Right cardiac atrium (tissue), 5 donors: ENCODE measurements at regions of chr12 and their contacts with region 1.

Region 1: GRCh38 chr12:569803-570434 is 93.3 kb downstream of the NINJ2 start:
- DNase-seq: peak; percentile 91 to 97 (median 96)
- ATAC-seq: peak; percentile 78 to 82
- H3K4me3 ChIP-seq: peak overlapping the region; percentile 47
- H3K27ac ChIP-seq: peak overlapping the region; percentile 93
- H3K4me1 ChIP-seq: peaks cover 9% of the 10 kb centered on the region
- H3K27me3 ChIP-seq: no peaks in the 10 kb centered on the region

Region 2: DNA sequence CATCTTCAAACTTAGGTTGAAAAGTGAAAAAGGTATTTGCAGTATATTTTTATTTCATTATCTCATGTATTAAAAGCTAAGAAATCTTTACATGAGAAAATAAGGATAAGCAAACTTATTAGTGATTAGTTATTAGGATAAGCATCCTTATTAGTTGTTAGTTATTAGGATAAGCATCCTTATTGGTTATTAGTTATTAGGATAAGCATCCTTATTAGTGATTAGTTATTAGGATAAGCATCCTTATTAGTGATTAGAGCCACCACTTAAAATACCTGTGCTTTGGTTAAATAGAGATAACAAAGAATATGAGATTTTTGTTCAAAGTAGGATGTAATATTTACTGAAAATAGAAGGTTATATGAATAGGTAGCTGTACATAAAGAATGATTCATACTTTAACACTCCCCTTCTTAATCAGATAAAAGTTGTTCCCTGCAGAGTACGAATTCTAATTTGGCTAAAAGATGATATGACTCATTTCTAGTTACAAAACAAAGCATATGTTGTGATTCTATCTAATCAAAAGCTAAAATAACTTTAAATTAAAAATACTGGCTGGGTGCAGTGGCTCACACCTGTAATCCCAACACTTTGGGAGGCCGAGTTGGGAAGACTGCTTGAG is 237.2 kb before region 1 on chr12:
- intact Hi-C with region 1: no loop called
- DNase-seq: no peak
- ATAC-seq: no peak
- H3K4me3 ChIP-seq: no peak overlapping the region
- H3K27ac ChIP-seq: no peak overlapping the region
- H3K4me1 ChIP-seq: no peaks in the 10 kb centered on the region
- H3K27me3 ChIP-seq: no peaks in the 10 kb centered on the region

Region 3: DNA sequence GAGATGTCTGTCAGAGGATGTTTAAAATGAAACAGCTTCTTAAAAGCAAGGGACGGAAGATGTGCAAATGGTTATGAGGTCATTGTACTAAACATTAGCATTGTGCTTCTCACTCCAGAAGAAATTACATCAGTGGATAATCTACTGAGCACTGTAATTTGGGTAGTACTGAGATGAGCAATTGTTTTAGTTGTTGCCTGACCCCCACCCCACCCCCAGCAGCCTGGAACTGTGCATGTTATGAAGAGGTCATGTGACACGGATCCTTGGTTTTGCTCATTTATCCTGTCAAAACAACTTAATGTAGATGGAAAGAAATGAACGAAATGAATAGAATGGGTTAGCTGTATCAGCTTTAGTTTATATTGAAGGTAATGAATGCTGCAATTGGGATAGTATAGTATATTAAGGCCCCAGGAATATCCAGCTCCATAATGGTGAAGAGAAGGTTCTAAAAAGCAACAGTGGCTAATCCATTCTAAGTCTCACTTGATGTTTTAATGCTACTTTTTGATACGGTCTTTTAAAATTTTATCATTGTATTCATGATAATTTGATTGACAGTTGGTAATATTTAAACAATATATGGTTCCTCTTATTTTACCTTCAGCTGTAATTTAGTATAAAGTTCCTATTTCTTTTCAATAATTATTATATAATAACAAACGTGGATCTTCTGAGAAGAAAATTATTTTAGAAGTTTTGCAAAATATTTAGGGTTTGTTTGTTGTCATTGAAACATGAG is 240.9 kb after region 1 on chr12:
- intact Hi-C with region 1: loop called (anchors 5 kb)
- DNase-seq: no peak
- ATAC-seq: peak in 1 of 2 donors; percentile 33
- H3K4me3 ChIP-seq: no peak overlapping the region
- H3K27ac ChIP-seq: no peak overlapping the region
- H3K4me1 ChIP-seq: peaks cover 3% of the 10 kb centered on the region
- H3K27me3 ChIP-seq: no peaks in the 10 kb centered on the region

Region 4: DNA sequence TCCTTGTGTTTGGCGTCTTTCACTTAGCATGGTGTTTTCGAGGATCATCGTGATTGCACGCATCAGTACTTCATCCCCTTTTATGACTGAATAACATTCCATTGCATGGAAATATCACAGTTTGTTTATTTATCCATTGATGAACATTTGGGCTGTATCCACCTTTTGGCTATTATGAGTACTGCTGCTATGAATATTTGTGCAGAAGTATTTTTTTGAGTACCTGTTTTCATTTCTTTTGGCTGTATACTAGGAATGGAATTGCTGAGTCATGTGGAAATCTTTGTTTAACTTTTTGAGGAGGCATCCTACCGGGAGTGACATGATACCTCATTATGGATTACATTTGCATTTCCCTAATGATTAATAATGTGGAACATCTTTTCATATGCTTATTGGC is 248.8 kb after region 1 on chr12:
- intact Hi-C with region 1: loop called (anchors 5 kb)
- DNase-seq: no peak
- ATAC-seq: no peak
- H3K4me3 ChIP-seq: no peak overlapping the region
- H3K27ac ChIP-seq: no peak overlapping the region
- H3K4me1 ChIP-seq: peaks cover 2% of the 10 kb centered on the region
- H3K27me3 ChIP-seq: no peaks in the 10 kb centered on the region

Region 5: GRCh38 chr12:949453-950191 is 379.7 kb after region 1 on chr12 and contains the start of gene RAD52:
- intact Hi-C with region 1: loop called (anchors 2 to 10 kb)
- DNase-seq: peak; percentile 98 to 99 (median 99)
- ATAC-seq: peak; percentile 98
- H3K4me3 ChIP-seq: peak within 1 kb of the TSS; percentile 75
- H3K27ac ChIP-seq: peak within 1 kb of the TSS; percentile 93
- H3K4me1 ChIP-seq: peaks cover 2% of the 10 kb centered on the region
- H3K27me3 ChIP-seq: no peaks in the 10 kb centered on the region
- total RNA-seq, gene RAD52: 8.1 to 10.0 (median 9.3) TPM